ENCODE measurements at regions of chr5 and their contacts with region 1.

Region 1: DNA sequence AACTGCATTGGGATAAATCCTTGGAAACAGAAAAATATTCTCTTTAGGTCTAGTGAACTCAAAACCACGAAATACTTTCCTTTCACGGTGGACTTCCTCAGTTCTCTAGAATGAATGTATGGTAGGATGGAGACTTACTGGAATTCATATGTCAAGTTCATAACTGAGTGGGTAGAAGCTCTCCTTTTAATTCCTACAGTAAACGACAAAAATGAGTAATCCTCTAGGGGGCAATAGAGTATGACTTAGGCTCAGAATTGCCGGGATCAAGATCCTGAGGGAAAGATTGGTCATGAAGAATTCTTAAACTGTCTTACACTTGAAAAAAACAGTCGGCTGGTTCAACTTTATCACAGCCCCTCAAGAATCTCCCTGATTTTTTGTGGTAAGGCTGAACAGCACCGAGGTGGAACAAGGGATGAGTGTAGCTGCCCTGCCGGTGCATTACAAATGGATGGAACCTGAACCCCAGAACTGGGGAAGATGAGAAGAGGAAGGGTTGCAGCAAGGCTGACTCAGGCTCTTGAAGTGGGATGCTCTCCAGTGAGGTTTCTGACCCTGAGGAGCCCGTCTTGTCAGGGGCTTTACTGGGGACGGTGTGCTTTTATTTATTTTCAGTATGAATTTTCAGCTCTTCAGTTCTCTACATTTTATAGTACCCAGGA is 14.0 kb upstream of the LOX start:
- DNase-seq: no peak
- H3K4me3 ChIP-seq: no peak overlapping the region
- H3K27ac ChIP-seq: no peak overlapping the region
- H3K4me1 ChIP-seq: no peaks in the 10 kb centered on the region
- H3K27me3 ChIP-seq: no peaks in the 10 kb centered on the region
- CTCF ChIP-seq: peak in 3 of 4 experiments; percentile 39 to 54 (median 42)
- POLR2A ChIP-seq: no peak

Region 2: GRCh38 chr5:121987685-121988073 is 104.4 kb before region 1 on chr5:
- intact Hi-C with region 1: no loop called
- DNase-seq: peak; percentile 4
- H3K4me3 ChIP-seq: no peak overlapping the region
- H3K27ac ChIP-seq: no peak overlapping the region
- H3K4me1 ChIP-seq: no peaks in the 10 kb centered on the region
- H3K27me3 ChIP-seq: no peaks in the 10 kb centered on the region
- CTCF ChIP-seq: no peak
- POLR2A ChIP-seq: no peak

Region 3: GRCh38 chr5:122156724-122157325 is 64.8 kb after region 1 on chr5:
- intact Hi-C with region 1: loop called (anchors 5 kb)
- DNase-seq: no peak
- H3K4me3 ChIP-seq: no peak overlapping the region
- H3K27ac ChIP-seq: no peak overlapping the region
- H3K4me1 ChIP-seq: no peaks in the 10 kb centered on the region
- H3K27me3 ChIP-seq: no peaks in the 10 kb centered on the region
- CTCF ChIP-seq: peak in 3 of 4 experiments; percentile 34 to 53 (median 40)
- POLR2A ChIP-seq: no peak